ENCODE measurements at regions of chr9 and their contacts with region 1.

Region 1: GRCh38 chr9:27333241-27334052 is 36.5 kb upstream of the EQTN start:
- DNase-seq: peak; percentile 51
- H3K4me3 ChIP-seq: no peak overlapping the region
- H3K27ac ChIP-seq: no peak overlapping the region
- H3K27me3 ChIP-seq: no peaks in the 10 kb centered on the region
- CTCF ChIP-seq: peak; percentile 87

Region 2: GRCh38 chr9:27204578-27204977 is 128.9 kb before region 1 on chr9:
- CTCF ChIA-PET with region 1: no interaction called
- POLR2A ChIA-PET with region 1: no interaction called
- DNase-seq: no peak
- H3K4me3 ChIP-seq: no peak overlapping the region
- H3K27ac ChIP-seq: no peak overlapping the region
- H3K27me3 ChIP-seq: no peaks in the 10 kb centered on the region
- CTCF ChIP-seq: no peak

Region 3: DNA sequence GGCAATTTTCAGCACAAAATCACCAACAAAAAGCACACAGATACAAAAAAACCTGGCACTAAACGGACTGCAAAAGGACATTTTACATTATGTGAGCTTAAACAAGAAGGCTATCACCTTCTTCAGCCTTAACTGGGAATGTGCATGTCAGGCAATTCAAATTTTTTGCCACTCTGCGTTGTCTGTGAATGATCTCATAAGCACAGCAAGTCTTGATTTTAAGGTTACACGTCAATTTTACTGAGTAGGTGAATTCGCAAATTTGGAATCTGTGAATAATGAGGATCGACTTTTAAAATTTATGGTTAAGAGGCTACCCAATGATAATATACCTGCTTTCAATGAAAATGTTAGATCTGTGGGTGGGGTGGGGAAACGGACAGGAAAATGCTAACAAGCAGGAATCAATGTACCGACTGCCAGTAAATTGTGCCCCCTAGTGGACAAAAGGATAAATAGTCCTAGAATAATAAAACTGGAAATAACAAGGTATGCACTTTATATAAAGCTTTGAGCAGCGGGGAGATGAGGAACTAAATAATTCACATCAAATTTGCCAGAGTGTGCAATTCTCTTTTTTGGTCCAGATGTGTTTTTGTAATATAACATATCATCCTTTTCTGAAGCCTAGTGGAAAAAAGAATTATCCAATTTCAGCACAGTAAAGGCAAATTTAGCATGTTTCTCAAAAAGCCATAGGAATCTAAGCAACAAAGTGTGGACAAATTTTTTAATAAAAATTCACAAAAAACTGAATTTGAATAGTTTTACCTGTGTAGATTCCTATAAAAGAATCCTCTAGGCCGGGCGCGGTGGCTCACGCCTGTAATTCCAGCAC is 57.0 kb before region 1 on chr9:
- CTCF ChIA-PET with region 1: interaction called, 11 read pairs
- POLR2A ChIA-PET with region 1: no interaction called
- DNase-seq: peak; percentile 16
- H3K4me3 ChIP-seq: no peak overlapping the region
- H3K27ac ChIP-seq: no peak overlapping the region
- H3K27me3 ChIP-seq: peaks cover 13% of the 10 kb centered on the region
- CTCF ChIP-seq: peak; percentile 71

Region 4: GRCh38 chr9:27529316-27530278 is 196.2 kb after region 1 on chr9 and contains the start of gene MOB3B:
- CTCF ChIA-PET with region 1: interaction called, 41 read pairs
- POLR2A ChIA-PET with region 1: interaction called, 3 read pairs
- DNase-seq: peak; percentile 16
- H3K4me3 ChIP-seq: peak within 1 kb of the TSS; percentile 64
- H3K27ac ChIP-seq: no peak within 1 kb of the TSS
- H3K27me3 ChIP-seq: peaks cover 33% of the 10 kb centered on the region
- CTCF ChIP-seq: peak; percentile 78
- polyA plus RNA-seq, gene MOB3B: 0.32 and 0.38 TPM in 2 replicates

Region 5: GRCh38 chr9:27548055-27548741 is 214.8 kb after region 1 on chr9:
- CTCF ChIA-PET with region 1: interaction called, 211 read pairs
- POLR2A ChIA-PET with region 1: no interaction called
- DNase-seq: no peak
- H3K4me3 ChIP-seq: no peak overlapping the region
- H3K27ac ChIP-seq: no peak overlapping the region
- H3K27me3 ChIP-seq: no peaks in the 10 kb centered on the region
- CTCF ChIP-seq: peak; percentile 57

Region 6: DNA sequence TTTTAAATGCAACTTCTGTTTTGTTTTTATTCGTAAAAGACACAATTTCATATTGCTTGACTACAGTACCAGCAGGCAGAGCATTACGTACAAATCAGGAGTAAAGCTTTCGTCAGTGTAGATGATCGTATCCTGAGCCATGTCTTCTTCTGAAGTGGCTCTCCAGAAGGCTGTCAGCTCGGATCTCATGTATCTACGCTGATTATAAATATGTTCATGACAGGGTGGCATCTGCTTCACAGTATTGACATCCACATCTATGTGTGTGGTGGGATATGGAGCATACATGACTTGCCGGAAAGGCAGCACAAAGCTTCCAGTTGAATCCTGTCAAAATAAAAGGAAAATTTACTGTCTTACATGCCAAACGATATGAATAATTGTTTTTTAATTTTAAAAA is 223.0 kb after region 1 on chr9:
- CTCF ChIA-PET with region 1: interaction called, 20 read pairs
- POLR2A ChIA-PET with region 1: no interaction called
- DNase-seq: no peak
- H3K4me3 ChIP-seq: no peak overlapping the region
- H3K27ac ChIP-seq: no peak overlapping the region
- H3K27me3 ChIP-seq: no peaks in the 10 kb centered on the region
- CTCF ChIP-seq: no peak

Region 7: GRCh38 chr9:27561685-27562084 is 228.2 kb after region 1 on chr9:
- CTCF ChIA-PET with region 1: interaction called, 13 read pairs
- POLR2A ChIA-PET with region 1: no interaction called
- DNase-seq: no peak
- H3K4me3 ChIP-seq: no peak overlapping the region
- H3K27ac ChIP-seq: no peak overlapping the region
- H3K27me3 ChIP-seq: no peaks in the 10 kb centered on the region
- CTCF ChIP-seq: no peak